ENCODE measurements at regions of chr16 and their contacts with region 1.

Region 1: GRCh38 chr16:11407047-11407982 is 62.1 kb downstream of the RMI2 start:
- DNase-seq: peak; percentile 48 to 72
- H3K4me3 ChIP-seq: no peak overlapping the region
- H3K27ac ChIP-seq: no peak overlapping the region
- H3K4me1 ChIP-seq: no peaks in the 10 kb centered on the region
- H3K27me3 ChIP-seq: no peaks in the 10 kb centered on the region
- CTCF ChIP-seq: peak; percentile 85

Region 2: DNA sequence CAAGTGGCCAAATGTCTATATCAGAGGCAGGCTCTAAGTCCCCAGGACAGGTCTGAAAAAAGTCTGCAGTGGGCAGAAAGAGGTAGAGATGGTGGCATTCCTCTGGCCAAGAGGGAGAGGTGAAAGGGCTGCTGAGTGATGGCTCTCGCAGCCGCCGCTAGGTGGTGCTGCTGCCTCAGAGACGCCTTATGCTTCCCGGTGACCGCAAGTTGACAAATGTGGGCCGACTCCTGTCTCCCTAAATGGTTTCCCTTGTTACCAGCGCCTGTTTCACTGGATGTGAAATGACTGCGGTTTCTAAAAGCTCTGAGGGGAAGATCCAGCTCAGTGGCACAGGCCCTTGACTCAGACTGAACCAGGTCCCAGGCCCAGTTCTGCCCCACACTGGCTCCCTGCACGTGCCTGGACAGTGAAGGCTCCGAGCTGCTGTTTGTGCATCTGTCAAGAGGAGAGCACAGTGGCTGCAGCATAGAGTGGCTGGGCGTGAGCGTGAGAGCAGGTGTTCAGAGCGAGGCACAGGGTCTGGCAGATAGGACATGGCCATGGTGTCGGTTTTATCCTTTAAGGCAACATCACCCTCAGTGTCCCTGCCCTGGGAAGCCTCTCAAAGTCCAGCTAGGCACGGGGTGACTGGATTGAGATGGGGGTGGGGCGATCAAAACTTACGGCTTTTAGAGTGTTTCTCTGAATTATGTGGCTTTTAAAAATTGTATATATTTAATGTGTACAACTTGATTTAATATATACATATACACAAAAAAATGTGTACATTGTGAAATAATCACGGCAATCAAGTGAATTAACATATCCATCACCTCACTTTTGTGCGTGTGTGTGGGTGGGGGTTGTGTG is 443.1 kb before region 1 on chr16:
- CTCF ChIA-PET with region 1: interaction called, 5 read pairs
- POLR2A ChIA-PET with region 1: no interaction called
- intact Hi-C with region 1: loop called (anchors 1 kb)
- DNase-seq: peak in 1 of 2 experiments; percentile 83
- H3K4me3 ChIP-seq: no peak overlapping the region
- H3K27ac ChIP-seq: no peak overlapping the region
- H3K4me1 ChIP-seq: no peaks in the 10 kb centered on the region
- H3K27me3 ChIP-seq: no peaks in the 10 kb centered on the region
- CTCF ChIP-seq: peak; percentile 91

Region 3: GRCh38 chr16:11497851-11498289 is 90.6 kb after region 1 on chr16:
- CTCF ChIA-PET with region 1: no interaction called
- POLR2A ChIA-PET with region 1: no interaction called
- intact Hi-C with region 1: loop called (anchors 2 kb)
- DNase-seq: peak in 1 of 2 experiments; percentile 65
- H3K4me3 ChIP-seq: no peak overlapping the region
- H3K27ac ChIP-seq: peak overlapping the region; percentile 50
- H3K4me1 ChIP-seq: peaks cover 20% of the 10 kb centered on the region
- H3K27me3 ChIP-seq: no peaks in the 10 kb centered on the region
- CTCF ChIP-seq: no peak

Region 4: GRCh38 chr16:11570258-11570657 is 162.9 kb after region 1 on chr16:
- CTCF ChIA-PET with region 1: no interaction called
- POLR2A ChIA-PET with region 1: no interaction called
- intact Hi-C with region 1: no loop called
- DNase-seq: no peak
- H3K4me3 ChIP-seq: no peak overlapping the region
- H3K27ac ChIP-seq: no peak overlapping the region
- H3K4me1 ChIP-seq: no peaks in the 10 kb centered on the region
- H3K27me3 ChIP-seq: no peaks in the 10 kb centered on the region
- CTCF ChIP-seq: no peak

Region 5: GRCh38 chr16:11639925-11640899 is 232.9 kb after region 1 on chr16:
- CTCF ChIA-PET with region 1: no interaction called
- POLR2A ChIA-PET with region 1: no interaction called
- intact Hi-C with region 1: loop called (anchors 1 kb)
- DNase-seq: peak; percentile 92 to 97
- H3K4me3 ChIP-seq: peak overlapping the region; percentile 36; the same call in 1 of the 2 replicates
- H3K27ac ChIP-seq: peak overlapping the region; percentile 99
- H3K4me1 ChIP-seq: peaks cover 49% of the 10 kb centered on the region
- H3K27me3 ChIP-seq: no peaks in the 10 kb centered on the region
- CTCF ChIP-seq: no peak

Region 6: DNA sequence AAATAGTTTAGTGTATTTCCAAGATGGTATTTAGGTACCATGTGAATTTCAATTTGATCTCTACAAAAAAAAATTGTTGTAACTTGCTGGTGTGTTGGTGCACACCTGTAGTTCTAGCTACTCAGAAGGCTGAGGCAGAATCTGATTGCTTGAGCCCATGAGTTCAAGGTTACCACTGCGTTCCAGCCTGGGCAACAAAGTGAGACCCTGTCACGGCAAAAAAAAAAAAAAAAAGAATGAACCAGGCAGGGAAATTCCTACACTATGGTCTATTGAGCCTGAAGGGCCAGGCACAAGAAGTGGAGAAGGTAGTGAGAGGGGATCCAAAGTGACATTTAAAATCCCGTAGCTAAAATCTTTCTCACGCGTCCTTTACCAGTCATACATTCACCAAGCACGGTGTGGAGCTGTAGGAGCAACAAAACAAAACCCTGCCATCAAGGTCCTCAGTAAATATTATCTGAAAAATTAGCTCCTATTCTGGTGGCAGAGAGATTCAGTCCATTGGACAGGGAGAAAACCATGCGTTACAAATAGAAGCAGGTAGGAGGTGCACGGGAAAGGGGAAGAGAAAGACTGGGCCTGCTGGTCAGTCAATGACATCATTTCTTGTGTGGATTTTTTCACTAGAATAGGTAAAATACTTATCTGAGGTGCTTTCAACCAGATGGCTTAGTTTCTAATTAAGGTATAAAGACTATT is 308.1 kb after region 1 on chr16:
- CTCF ChIA-PET with region 1: interaction called, 4 read pairs
- POLR2A ChIA-PET with region 1: no interaction called
- intact Hi-C with region 1: loop called (anchors 1 kb)
- DNase-seq: no peak
- H3K4me3 ChIP-seq: no peak overlapping the region
- H3K27ac ChIP-seq: no peak overlapping the region
- H3K4me1 ChIP-seq: no peaks in the 10 kb centered on the region
- H3K27me3 ChIP-seq: no peaks in the 10 kb centered on the region
- CTCF ChIP-seq: no peak

Measured in PC-9 (cell line).